IMR-90 (cell line): ENCODE measurements at regions of chr14 and their contacts with region 1.

Region 1: DNA sequence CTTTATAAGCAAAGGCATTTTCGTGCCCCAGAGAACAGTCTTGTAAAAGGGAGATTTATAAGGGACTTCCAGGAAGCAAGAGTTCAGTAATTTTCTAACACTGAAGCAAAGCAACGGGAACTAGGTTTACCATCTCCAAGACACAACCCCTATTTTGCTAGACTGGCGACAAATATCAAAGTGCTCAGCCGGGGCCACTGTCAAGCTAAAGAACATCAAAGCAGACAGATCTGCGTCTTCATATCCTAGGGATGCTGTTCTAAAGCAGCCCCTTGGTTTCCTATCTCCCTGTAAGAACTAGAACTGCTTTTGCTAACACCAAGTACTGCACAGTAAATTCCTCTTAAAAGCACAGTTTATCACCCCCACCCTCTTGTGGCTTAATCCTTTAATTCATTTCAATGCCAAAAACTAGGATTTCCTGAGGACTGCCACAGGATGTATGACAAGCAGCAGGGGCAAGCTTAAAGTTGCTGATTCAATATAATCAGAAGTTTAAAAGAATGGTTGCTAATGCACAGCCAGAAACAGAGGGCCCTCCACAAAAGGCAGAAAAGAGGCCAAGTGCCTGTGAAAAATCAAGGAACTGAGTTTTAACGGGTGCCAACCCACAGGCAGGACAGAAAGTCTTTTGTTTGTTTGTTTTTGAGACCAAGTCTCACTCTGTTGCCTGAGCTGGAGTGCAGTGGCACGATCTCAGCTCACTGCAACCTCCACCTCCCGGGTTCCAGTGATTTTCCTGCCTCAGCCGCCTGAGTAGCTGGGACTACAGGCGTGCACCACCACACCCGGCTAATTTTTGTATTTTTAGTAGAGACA is 44.0 kb upstream of the ISM2 start:
- DNase-seq: no peak
- ATAC-seq: peak; percentile 45
- H3K4me3 ChIP-seq: no peak overlapping the region
- H3K27ac ChIP-seq: no peak overlapping the region
- H3K4me1 ChIP-seq: peaks cover 8% of the 10 kb centered on the region; the same call in 1 of the 2 replicates
- H3K27me3 ChIP-seq: no peaks in the 10 kb centered on the region
- CTCF ChIP-seq: no peak
- POLR2A ChIP-seq: no peak
- RAD21 ChIP-seq: no peak

Region 2: GRCh38 chr14:77290741-77291140 is 251.9 kb before region 1 on chr14:
- CTCF ChIA-PET with region 1: no interaction called
- POLR2A ChIA-PET with region 1: no interaction called
- dilution Hi-C with region 1: no loop called
- in situ Hi-C with region 1: loop called (anchors 10 kb)
- intact Hi-C with region 1: no loop called
- DNase-seq: peak; percentile 75
- ATAC-seq: peak; percentile 77
- H3K4me3 ChIP-seq: no peak overlapping the region
- H3K27ac ChIP-seq: no peak overlapping the region
- H3K4me1 ChIP-seq: no peaks in the 10 kb centered on the region; the same call in 1 of the 2 replicates
- H3K27me3 ChIP-seq: no peaks in the 10 kb centered on the region
- CTCF ChIP-seq: peak; percentile 12; the same call in 1 of the 2 replicates
- POLR2A ChIP-seq: no peak
- RAD21 ChIP-seq: no peak

Region 3: DNA sequence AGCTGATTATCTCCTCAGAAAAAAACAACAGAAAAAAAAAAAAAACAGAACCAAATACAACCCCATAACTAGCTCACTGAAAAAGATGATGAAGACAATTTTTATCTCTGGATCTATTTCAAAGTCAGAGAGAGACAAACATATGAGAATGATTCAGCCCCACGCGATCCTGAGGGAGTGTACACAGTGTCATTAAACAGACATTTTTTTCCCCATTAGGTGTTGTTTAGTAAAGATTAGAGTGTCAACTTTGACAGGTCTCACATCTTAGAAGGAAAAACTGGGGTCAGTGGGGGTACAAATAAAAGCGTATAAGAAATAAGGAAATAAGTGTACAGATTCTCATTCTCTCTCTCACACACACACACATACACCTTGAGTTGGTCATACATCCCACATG is 1262.9 kb after region 1 on chr14:
- CTCF ChIA-PET with region 1: no interaction called
- POLR2A ChIA-PET with region 1: no interaction called
- dilution Hi-C with region 1: no loop called
- in situ Hi-C with region 1: no loop called
- intact Hi-C with region 1: no loop called
- DNase-seq: no peak
- ATAC-seq: no peak
- H3K4me3 ChIP-seq: no peak overlapping the region
- H3K27ac ChIP-seq: no peak overlapping the region
- H3K4me1 ChIP-seq: no peaks in the 10 kb centered on the region
- H3K27me3 ChIP-seq: no peaks in the 10 kb centered on the region
- CTCF ChIP-seq: no peak
- POLR2A ChIP-seq: no peak
- RAD21 ChIP-seq: no peak